ENCODE measurements at regions of chr11 and their contacts with region 1.

Region 1: GRCh38 chr11:116499396-116500003 is 273.3 kb downstream of the BUD13 start:
- DNase-seq: peak; percentile 67
- H3K4me3 ChIP-seq: no peak overlapping the region; a peak in 1 of 4 replicates
- H3K27ac ChIP-seq: peak overlapping the region in 1 of 2 experiments; percentile 97; a peak in 2 of 4 replicates
- H3K4me1 ChIP-seq: peaks cover 0 to 67% of the 10 kb centered on the region in 2 experiments; a peak in 2 of 4 replicates
- H3K27me3 ChIP-seq: peaks cover 12% of the 10 kb centered on the region; the same call in 1 of the 2 replicates
- CTCF ChIP-seq: peak; percentile 70
- EP300 ChIP-seq: no peak
- RAD21 ChIP-seq: peak; percentile 76

Region 2: DNA sequence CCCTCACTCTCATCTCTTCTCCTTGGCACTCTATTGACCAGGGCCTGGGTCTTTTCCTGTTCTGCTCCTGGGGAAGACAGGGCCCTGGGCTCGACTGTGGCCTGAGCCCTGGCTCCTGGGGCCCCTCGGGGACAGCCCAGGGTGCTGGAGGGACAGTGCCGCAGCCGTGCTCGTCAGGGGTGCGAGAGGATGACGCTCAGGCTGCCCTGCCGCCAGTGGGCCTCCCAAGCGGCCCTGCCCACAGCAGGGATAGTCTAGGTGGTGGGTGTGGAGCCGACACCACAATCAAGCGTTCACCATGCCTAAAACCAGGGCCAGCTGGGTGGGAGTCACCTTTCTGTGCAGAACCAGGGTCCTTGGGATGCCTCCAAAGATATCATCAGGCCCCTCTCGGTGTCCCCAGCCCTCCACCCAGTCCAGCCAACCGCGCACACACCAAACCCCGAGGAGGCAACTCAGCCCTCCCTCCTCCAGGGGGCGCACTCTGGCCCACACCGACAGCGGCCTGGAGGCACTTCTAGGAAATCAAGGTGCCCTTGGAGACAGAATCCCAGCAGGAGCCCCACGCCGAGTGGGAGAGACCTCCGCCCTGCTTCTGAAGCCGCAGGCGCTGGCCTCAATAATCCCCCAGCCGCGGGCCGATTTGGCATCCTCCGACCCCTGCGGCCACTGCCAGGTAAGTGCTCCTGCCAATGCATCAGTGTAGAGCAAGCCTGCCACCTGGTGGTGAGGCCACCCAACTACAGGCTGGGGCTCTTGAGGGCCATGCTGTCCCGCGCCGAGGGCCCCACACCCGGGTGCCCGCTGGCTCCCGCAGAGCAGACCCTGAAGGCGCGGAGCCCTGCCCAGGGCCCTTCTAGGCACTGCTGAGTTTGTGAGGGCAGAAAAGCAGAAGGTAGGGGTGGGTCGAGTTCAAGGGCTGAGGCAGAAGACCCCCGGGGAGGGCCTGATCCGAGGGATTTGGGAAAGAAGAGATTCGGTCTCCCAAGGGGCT is 223.2 kb before region 1 on chr11:
- CTCF ChIA-PET with region 1: interaction called, 15 read pairs
- POLR2A ChIA-PET with region 1: no interaction called
- DNase-seq: peak; percentile 83
- H3K4me3 ChIP-seq: peak overlapping the region in 1 of 2 experiments; percentile 44; a peak in 1 of 4 replicates
- H3K27ac ChIP-seq: peak overlapping the region in 1 of 2 experiments; percentile 72; a peak in 1 of 4 replicates
- H3K4me1 ChIP-seq: peaks cover 0 to 40% of the 10 kb centered on the region in 2 experiments; a peak in 1 of 4 replicates
- H3K27me3 ChIP-seq: no peaks in the 10 kb centered on the region
- CTCF ChIP-seq: peak; percentile 70
- EP300 ChIP-seq: no peak
- RAD21 ChIP-seq: peak; percentile 87

Region 3: DNA sequence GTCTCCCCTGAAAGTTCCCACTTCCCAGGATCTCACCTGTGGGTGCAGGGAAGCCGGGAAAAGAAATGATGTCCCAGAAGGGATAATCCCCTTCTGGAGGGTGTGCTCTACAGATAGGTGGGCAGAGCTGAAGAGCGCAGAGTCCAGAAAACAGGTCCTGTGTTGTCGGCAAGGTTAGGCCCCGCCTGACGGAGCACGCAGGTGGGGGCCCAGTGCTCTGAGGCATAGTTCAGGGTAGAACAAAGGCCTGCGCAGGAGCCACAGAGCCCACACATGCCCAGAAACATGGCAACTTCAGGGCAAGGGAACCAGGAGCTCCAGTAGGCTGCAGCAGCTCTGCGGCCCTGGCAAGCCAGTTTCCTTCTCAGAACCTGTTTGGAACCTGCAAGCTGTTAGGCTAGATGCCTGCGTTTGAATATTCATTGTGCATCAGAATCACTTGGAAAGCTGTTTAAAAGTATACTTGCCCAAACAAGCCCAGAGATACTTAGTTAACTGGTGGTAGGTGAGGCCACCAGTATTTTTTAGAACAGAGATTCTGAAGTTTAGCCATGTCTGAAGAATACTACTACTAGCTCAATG is 113.3 kb before region 1 on chr11:
- CTCF ChIA-PET with region 1: interaction called, 23 read pairs
- POLR2A ChIA-PET with region 1: interaction called, 45 read pairs
- DNase-seq: no peak
- H3K4me3 ChIP-seq: no peak overlapping the region
- H3K27ac ChIP-seq: peak overlapping the region in 1 of 2 experiments; percentile 96; a peak in 2 of 4 replicates
- H3K4me1 ChIP-seq: peaks cover 0 to 53% of the 10 kb centered on the region in 2 experiments; a peak in 2 of 4 replicates
- H3K27me3 ChIP-seq: no peaks in the 10 kb centered on the region
- CTCF ChIP-seq: no peak
- EP300 ChIP-seq: no peak
- RAD21 ChIP-seq: no peak

Region 4: GRCh38 chr11:116427903-116428637 is 71.4 kb before region 1 on chr11:
- CTCF ChIA-PET with region 1: interaction called, 109 read pairs
- POLR2A ChIA-PET with region 1: interaction called, 237 read pairs
- DNase-seq: peak; percentile 88
- H3K4me3 ChIP-seq: no peak overlapping the region; a peak in 1 of 4 replicates
- H3K27ac ChIP-seq: peak overlapping the region; percentile 32 to 100; a peak in 3 of 4 replicates
- H3K4me1 ChIP-seq: peaks cover 5 to 63% of the 10 kb centered on the region in 2 experiments; a peak in 3 of 4 replicates
- H3K27me3 ChIP-seq: no peaks in the 10 kb centered on the region
- CTCF ChIP-seq: no peak
- EP300 ChIP-seq: peak; percentile 27 to 97; a peak in 3 of 4 replicates
- RAD21 ChIP-seq: peak; percentile 50

Region 5: DNA sequence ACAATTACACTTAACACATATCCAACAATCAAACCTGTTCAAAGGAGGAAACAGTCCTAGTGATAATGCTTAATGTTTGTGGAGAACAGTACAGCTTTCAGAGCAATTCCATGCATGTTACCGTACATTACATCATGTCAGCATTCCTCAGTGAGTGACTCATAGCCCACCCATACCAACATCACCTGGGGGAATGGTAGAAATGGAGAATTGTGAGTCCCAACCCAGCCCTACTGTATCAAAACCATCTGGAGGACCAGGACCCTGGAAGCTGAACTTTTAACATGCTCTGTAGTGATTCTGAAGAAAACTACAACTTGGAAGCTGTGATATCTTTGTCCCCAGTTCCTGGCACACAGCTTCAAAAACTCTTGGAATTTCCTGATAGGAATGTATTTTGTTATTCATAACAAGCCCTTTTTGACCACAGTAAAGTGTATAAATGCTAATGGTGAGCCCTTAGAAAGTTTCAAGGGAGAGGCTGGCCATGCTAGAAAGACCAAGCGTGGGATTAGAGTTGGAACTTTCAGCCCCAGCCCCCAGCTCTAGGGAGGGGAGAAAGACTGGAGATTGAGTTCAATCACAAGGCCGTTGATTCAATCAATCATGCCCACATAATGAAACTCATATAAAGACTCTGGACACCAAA is 27.8 kb before region 1 on chr11:
- CTCF ChIA-PET with region 1: interaction called, 30 read pairs
- POLR2A ChIA-PET with region 1: interaction called, 10 read pairs
- DNase-seq: no peak
- H3K4me3 ChIP-seq: no peak overlapping the region
- H3K27ac ChIP-seq: peak overlapping the region in 1 of 2 experiments; percentile 94; a peak in 1 of 4 replicates
- H3K4me1 ChIP-seq: peaks cover 0 to 32% of the 10 kb centered on the region in 2 experiments; a peak in 2 of 4 replicates
- H3K27me3 ChIP-seq: no peaks in the 10 kb centered on the region
- CTCF ChIP-seq: no peak
- EP300 ChIP-seq: no peak
- RAD21 ChIP-seq: no peak

Region 6: GRCh38 chr11:116533186-116533825 is 33.8 kb after region 1 on chr11:
- CTCF ChIA-PET with region 1: interaction called, 10 read pairs
- POLR2A ChIA-PET with region 1: interaction called, 4 read pairs
- DNase-seq: peak; percentile 87
- H3K4me3 ChIP-seq: no peak overlapping the region
- H3K27ac ChIP-seq: peak overlapping the region in 1 of 2 experiments; percentile 83; a peak in 2 of 4 replicates
- H3K4me1 ChIP-seq: peaks cover 0 to 10% of the 10 kb centered on the region in 2 experiments; a peak in 1 of 4 replicates
- H3K27me3 ChIP-seq: peaks cover 13% of the 10 kb centered on the region; the same call in 1 of the 2 replicates
- CTCF ChIP-seq: 0 out of 2 replicates have a peak, but pooled peaks have one; percentile 27
- EP300 ChIP-seq: no peak
- RAD21 ChIP-seq: peak; percentile 81

Region 7: DNA sequence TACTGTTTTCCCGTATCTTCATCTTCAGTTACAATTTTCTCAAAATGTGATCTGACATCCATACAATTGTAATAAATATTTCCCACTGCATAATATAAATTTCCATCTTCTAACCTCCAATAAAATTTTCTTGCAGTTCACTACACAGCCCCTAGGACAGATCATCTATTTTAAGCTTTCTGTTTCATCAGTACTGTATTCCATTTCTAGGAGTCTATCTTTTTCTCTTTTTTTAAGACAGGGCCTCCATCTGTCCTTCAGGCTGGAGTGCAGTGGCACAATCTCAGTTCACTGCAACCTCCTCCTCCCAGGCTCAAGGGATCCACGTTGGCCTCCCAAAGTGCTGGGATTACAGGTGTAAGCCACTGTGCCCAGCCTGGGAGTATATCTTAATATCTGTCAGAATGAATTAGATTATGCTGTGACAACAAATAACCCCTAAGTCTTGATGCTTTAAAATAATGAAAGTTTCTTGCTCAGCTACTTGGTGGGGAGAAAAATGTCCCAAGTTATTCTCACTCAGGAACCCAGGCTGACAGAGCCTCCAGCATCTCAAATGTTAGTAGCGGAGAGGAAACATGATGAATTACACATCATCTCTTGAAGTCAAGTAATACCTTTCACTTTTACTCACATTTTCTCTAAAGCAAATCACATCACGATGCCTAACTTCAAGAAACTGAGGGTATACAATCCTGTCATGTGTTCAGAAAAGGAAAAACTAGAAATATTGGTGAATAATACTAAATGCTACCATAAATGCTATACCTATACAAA is 181.0 kb after region 1 on chr11:
- CTCF ChIA-PET with region 1: no interaction called
- POLR2A ChIA-PET with region 1: no interaction called
- DNase-seq: no peak
- H3K4me3 ChIP-seq: no peak overlapping the region
- H3K27ac ChIP-seq: no peak overlapping the region
- H3K4me1 ChIP-seq: no peaks in the 10 kb centered on the region
- H3K27me3 ChIP-seq: no peaks in the 10 kb centered on the region
- CTCF ChIP-seq: no peak; the same call in 1 of the 2 replicates
- EP300 ChIP-seq: no peak
- RAD21 ChIP-seq: no peak